Activated CD8-positive, alpha-beta T cell treated with anti-CD3 and anti-CD28 coated beads, Interleukin-2, amount 10 ng/mL, durations not matched to agents 7 days and 5 days (primary cell): ENCODE measurements at regions of chr3 and their contacts with region 1.

Region 1: DNA sequence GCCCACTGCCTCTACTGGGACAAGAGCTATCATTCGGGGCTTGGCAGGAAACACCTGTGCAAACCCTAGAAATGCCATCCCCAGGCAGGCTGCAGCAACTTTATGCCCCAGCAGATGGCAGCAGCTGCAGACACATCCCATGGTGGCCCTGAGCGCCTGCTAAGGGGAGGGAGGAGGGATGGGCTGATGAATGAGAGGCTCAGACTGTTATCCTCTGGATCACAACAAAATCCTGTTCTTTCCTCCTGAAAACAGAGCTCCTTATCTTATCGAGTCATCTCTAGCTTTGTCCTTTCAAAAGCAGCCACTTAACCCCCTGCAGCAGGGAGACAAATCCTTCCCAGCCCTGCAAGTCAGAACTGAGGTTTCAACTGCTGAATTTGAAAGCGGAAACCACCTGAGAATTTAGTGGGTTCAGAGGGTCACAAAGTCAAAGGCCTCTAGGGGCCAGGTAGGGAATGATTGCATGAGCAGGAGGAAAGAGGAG is 90.6 kb upstream of the PROK2 start:
- DNase-seq: peak; percentile 83
- ATAC-seq: peak; percentile 95
- H3K4me3 Mint-ChIP-seq: no peak overlapping the region
- H3K27ac Mint-ChIP-seq: no peak overlapping the region
- H3K4me1 Mint-ChIP-seq: peaks cover 21% of the 10 kb centered on the region
- H3K27me3 Mint-ChIP-seq: peaks cover under 1% of the 10 kb centered on the region

Region 2: GRCh38 chr3:71710906-71711494 is 164.5 kb before region 1 on chr3:
- CTCF ChIA-PET with region 1: interaction called, 24 read pairs
- POLR2A ChIA-PET with region 1: no interaction called
- DNase-seq: no peak
- ATAC-seq: peak; percentile 67
- H3K4me3 Mint-ChIP-seq: no peak overlapping the region
- H3K27ac Mint-ChIP-seq: no peak overlapping the region
- H3K4me1 Mint-ChIP-seq: peaks cover 69% of the 10 kb centered on the region
- H3K27me3 Mint-ChIP-seq: no peaks in the 10 kb centered on the region

Region 3: GRCh38 chr3:71724584-71725278 is 150.8 kb before region 1 on chr3:
- CTCF ChIA-PET with region 1: interaction called, 15 read pairs
- POLR2A ChIA-PET with region 1: no interaction called
- DNase-seq: peak; percentile 45
- ATAC-seq: peak; percentile 43
- H3K4me3 Mint-ChIP-seq: peak overlapping the region; percentile 94
- H3K27ac Mint-ChIP-seq: peak overlapping the region; percentile 92
- H3K4me1 Mint-ChIP-seq: peaks cover 59% of the 10 kb centered on the region
- H3K27me3 Mint-ChIP-seq: no peaks in the 10 kb centered on the region

Region 4: GRCh38 chr3:71859123-71859519 is 16.4 kb before region 1 on chr3:
- CTCF ChIA-PET with region 1: interaction called, 17 read pairs
- POLR2A ChIA-PET with region 1: no interaction called
- DNase-seq: peak; percentile 28
- ATAC-seq: peak; percentile 57
- H3K4me3 Mint-ChIP-seq: no peak overlapping the region
- H3K27ac Mint-ChIP-seq: no peak overlapping the region
- H3K4me1 Mint-ChIP-seq: peaks cover 6% of the 10 kb centered on the region
- H3K27me3 Mint-ChIP-seq: peaks cover 15% of the 10 kb centered on the region

Region 5: GRCh38 chr3:71890356-71891215 is 15.1 kb after region 1 on chr3:
- CTCF ChIA-PET with region 1: interaction called, 27 read pairs
- POLR2A ChIA-PET with region 1: no interaction called
- DNase-seq: no peak
- ATAC-seq: no peak
- H3K4me3 Mint-ChIP-seq: no peak overlapping the region
- H3K27ac Mint-ChIP-seq: no peak overlapping the region
- H3K4me1 Mint-ChIP-seq: no peaks in the 10 kb centered on the region
- H3K27me3 Mint-ChIP-seq: peaks cover 18% of the 10 kb centered on the region

Region 6: DNA sequence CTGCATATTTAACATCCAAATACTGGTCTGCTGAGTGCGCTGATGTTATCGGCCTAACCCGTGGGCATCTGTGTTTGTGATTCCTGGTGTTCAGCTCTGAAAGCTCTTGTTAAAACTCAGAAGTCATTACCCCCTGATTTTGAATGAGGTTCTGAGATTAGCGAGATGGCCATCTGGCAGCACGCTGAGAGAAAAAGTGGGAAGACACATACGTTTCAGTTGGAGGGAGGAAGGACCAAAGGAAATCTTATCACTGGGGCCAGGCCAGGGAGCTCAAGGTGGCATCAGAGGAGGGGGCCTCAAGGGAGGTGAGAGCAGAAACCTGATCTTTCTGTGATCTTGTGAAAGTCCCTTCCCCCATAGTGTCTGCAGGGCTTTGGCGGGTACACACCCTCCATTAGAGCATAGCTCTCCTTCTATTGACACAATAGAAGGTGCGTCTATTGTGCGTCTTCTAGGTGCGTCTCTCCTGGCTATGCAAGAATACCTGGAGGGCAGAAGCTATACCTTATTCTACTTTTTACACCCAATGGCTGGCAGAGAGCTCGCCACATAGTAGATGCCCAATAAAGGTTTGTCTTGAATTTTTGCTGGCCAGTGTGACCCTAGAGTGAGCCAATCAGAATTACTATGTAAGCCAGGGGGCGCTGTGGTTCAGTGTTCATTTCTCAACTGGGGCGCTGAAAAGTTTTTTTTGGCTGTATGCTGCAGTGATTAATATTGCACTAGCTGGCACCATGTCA is 790.4 kb after region 1 on chr3:
- CTCF ChIA-PET with region 1: interaction called, 11 read pairs
- POLR2A ChIA-PET with region 1: no interaction called
- DNase-seq: peak; percentile 67
- ATAC-seq: peak; percentile 53
- H3K4me3 Mint-ChIP-seq: no peak overlapping the region
- H3K27ac Mint-ChIP-seq: no peak overlapping the region
- H3K4me1 Mint-ChIP-seq: no peaks in the 10 kb centered on the region
- H3K27me3 Mint-ChIP-seq: no peaks in the 10 kb centered on the region